CD4-positive, alpha-beta memory T cell (primary cell): ENCODE measurements at regions of chr14 and their contacts with region 1.

Region 1: GRCh38 chr14:23555882-23556699 is at the start of gene THTPA:
- DNase-seq: peak; percentile 90 to 97 (median 92)
- H3K4me3 ChIP-seq: peak within 1 kb of the TSS; percentile 84 to 97
- H3K4me3 Mint-ChIP-seq: peak within 1 kb of the TSS; percentile 95 to 99 (median 96)
- H3K27ac ChIP-seq: peak within 1 kb of the TSS; percentile 86
- H3K27ac Mint-ChIP-seq: peak within 1 kb of the TSS; percentile 82 to 98 (median 97)
- H3K4me1 ChIP-seq: peaks cover 33% of the 10 kb centered on the region
- H3K4me1 Mint-ChIP-seq: peaks cover 15 to 44% (median 28%) of the 10 kb centered on the region in 4 donors
- H3K27me3 ChIP-seq: no peaks in the 10 kb centered on the region
- H3K27me3 Mint-ChIP-seq: peaks cover 0 to 2% of the 10 kb centered on the region in 2 donors
- total RNA-seq, gene THTPA: 25.6 to 26.2 TPM

Region 2: DNA sequence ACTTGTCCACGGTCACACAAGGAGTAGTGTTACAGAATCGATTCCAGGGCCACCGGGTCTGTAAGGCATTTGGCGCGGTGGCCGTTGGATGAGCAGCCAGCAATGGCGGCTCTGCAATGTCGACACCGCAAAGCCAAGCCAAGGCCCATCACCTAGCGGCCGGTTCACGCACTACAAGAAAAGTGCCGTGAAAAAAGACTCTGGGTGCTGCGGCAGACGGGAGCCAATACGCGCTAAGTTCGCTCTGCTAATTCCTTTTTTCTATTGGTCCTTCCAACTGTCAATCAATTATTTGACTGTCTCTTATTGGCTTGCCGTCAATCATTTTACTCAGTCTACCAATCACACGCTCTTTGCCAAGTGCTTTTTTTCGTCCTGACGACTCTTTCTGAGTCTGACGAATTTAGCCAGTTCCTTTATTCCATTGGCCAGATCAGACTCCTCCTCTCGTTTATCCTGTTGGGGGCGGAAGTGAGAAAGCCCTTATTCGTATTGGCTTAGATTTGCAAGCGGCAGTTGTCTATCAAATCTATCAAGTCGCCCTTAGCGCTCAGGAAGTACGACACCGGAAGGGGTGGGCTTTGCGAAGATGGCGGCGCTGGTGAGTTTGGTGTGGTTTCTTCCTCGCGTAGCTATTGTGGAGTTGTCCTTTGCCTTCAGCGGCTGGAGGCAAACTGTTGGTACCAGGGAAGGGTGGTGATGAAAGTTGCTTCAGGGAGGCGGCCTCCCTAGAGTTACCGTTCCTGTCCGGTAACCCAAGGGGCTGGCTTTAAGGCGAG is 86.8 kb before region 1 on chr14 and contains the start of gene NGDN:
- CTCF ChIA-PET with region 1: interaction called, 174 read pairs
- POLR2A ChIA-PET with region 1: interaction called, 4 read pairs
- intact Hi-C with region 1: loop called (anchors 1 kb)
- DNase-seq: peak; percentile 93 to 99 (median 97)
- H3K4me3 ChIP-seq: peak within 1 kb of the TSS; percentile 75 to 78
- H3K4me3 Mint-ChIP-seq: peak within 1 kb of the TSS in 1 of 8 donors; percentile 35
- H3K27ac ChIP-seq: peak within 1 kb of the TSS; percentile 89
- H3K27ac Mint-ChIP-seq: peak within 1 kb of the TSS in 3 of 7 donors; percentile 36 to 78 (median 43)
- H3K4me1 ChIP-seq: peaks cover 17% of the 10 kb centered on the region
- H3K4me1 Mint-ChIP-seq: peaks cover 0 to 7% (median 6%) of the 10 kb centered on the region in 4 donors
- H3K27me3 ChIP-seq: no peaks in the 10 kb centered on the region
- H3K27me3 Mint-ChIP-seq: no peaks in the 10 kb centered on the region
- total RNA-seq, gene NGDN: 60.7 to 63.5 TPM

Region 3: DNA sequence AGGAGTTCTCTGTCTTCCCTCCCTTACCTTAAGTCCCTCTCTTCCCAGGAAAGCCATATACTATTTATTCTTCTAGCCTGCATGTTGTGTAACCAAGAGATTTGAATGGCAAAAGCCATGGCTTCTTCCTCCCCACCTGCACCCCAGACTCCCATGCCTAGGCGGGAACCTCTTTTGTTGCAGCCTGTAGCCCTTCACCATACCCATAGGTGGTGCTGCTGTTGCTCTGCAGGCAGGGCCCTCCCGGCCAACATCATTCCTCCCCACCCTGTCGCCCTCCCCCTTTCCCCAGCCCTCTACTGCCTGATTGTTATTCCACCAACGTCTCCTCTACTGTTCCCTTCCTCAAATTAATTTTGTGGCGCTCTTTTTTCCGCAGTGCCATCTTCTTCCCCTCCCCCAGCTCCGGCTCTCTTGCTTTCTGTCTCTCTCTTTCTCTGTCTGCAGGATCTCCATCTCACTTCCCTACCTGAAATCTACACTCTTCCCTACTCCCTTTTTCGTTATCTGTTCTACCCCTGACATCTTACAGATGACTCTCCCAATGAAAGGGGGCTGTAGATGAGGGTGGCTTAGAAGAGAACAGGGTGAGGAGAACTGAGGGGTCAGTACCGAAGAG is 72.7 kb before region 1 on chr14:
- CTCF ChIA-PET with region 1: interaction called, 174 read pairs
- POLR2A ChIA-PET with region 1: interaction called, 6 read pairs
- intact Hi-C with region 1: no loop called
- DNase-seq: no peak
- H3K4me3 ChIP-seq: no peak overlapping the region
- H3K4me3 Mint-ChIP-seq: no peak overlapping the region
- H3K27ac ChIP-seq: no peak overlapping the region
- H3K27ac Mint-ChIP-seq: no peak overlapping the region
- H3K4me1 ChIP-seq: no peaks in the 10 kb centered on the region
- H3K4me1 Mint-ChIP-seq: peaks cover 0 to 4% (median 2%) of the 10 kb centered on the region in 4 donors
- H3K27me3 ChIP-seq: no peaks in the 10 kb centered on the region
- H3K27me3 Mint-ChIP-seq: no peaks in the 10 kb centered on the region

Region 4: DNA sequence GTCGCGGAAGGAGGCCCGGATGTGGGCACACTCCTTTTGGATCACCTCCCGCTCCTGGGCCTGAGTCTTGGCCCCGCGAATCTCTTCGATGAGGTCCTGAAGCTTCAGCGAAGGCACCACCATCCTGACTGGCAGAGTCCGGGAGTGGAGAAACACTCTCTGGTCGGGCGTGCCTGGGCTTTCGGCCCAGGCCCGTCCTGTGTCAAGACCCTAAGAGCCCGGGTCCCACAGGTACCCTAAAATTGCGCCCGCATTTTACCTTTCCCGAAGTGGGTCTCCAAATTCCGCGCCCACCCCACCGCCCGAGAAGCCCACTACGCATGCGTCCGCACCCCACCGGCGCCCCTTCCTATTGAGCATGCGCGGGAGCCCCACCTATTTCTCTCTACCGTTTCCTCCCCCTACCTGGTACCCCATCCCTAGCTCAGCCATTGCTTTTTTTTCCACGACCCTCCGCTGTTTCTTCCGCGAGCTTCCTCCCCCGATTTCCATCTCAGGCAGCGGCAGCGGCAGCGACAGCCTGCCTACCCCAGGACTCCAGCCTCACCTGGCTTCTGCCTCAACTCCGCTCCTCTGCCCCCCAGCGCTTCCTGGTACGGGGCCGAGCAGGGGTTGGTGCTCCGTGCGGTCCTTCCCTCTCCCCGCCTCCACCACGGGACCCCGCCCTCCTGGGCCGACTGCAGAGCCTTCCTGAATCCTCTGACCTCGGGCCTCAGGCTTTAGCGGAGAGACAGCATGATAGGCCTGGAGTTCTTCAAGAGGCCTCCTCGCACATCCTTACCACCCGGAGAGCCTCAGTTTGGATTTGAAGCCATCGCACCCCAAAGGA is 11.3 kb after region 1 on chr14 and contains the start of gene AP1G2:
- CTCF ChIA-PET with region 1: interaction called, 24 read pairs
- POLR2A ChIA-PET with region 1: interaction called, 44 read pairs
- intact Hi-C with region 1: loop called (anchors 1 kb)
- DNase-seq: peak; percentile 85 to 88 (median 86)
- H3K4me3 ChIP-seq: peak within 1 kb of the TSS; percentile 79 to 94
- H3K4me3 Mint-ChIP-seq: peak within 1 kb of the TSS; percentile 97 to 100 (median 100)
- H3K27ac ChIP-seq: peak within 1 kb of the TSS; percentile 74
- H3K27ac Mint-ChIP-seq: peak within 1 kb of the TSS; percentile 95 to 100 (median 98)
- H3K4me1 ChIP-seq: peaks cover 22% of the 10 kb centered on the region
- H3K4me1 Mint-ChIP-seq: peaks cover 22 to 55% (median 37%) of the 10 kb centered on the region in 4 donors
- H3K27me3 ChIP-seq: no peaks in the 10 kb centered on the region
- H3K27me3 Mint-ChIP-seq: peaks cover 1 to 2% of the 10 kb centered on the region in 2 donors
- total RNA-seq, gene AP1G2: 492 to 498 TPM

Region 5: DNA sequence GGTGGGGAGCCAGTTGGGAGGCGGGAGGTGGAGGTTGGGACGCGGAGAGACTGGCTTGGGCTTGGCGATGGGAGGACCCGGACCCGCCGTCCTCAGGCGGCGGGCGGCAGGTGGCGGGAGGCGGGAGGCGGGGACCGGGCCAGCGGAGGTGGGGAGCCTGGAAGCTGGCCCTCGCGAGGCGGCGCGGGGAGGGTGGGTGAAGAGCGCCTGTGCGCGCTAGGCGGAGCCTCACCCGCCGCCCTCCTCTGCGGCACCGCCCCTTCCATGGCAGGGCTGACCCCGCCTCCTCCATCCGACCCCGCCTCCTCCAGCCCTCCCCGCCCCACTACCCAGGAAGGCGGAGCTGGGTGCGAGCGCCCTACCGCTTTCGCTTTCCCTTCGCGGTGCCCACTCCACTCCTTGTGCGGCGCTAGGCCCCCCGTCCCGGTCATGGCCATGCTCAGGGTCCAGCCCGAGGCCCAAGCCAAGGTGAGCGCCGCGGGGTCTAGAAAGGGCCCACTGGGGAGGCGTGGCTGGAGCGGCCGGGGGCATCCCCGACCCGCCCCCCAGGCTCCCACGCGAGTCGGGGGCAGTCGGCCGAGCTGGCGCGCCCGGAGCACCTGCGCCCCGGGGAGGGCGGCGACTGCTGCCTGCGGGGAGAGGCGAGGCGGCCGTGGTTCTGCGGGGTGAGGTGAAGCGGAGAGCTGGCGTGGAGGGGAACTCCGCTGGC is 579.9 kb after region 1 on chr14 and contains the start of gene PSME1:
- CTCF ChIA-PET with region 1: no interaction called
- POLR2A ChIA-PET with region 1: no interaction called
- intact Hi-C with region 1: loop called (anchors 2 kb)
- DNase-seq: peak; percentile 92 to 94 (median 93)
- H3K4me3 ChIP-seq: peak within 1 kb of the TSS; percentile 30 to 87
- H3K4me3 Mint-ChIP-seq: peak within 1 kb of the TSS; percentile 87 to 94 (median 92)
- H3K27ac ChIP-seq: peak within 1 kb of the TSS; percentile 84
- H3K27ac Mint-ChIP-seq: peak within 1 kb of the TSS; percentile 88 to 96 (median 94)
- H3K4me1 ChIP-seq: peaks cover 59% of the 10 kb centered on the region
- H3K4me1 Mint-ChIP-seq: peaks cover 35 to 70% (median 55%) of the 10 kb centered on the region in 4 donors
- H3K27me3 ChIP-seq: no peaks in the 10 kb centered on the region
- H3K27me3 Mint-ChIP-seq: no peaks in the 10 kb centered on the region
- total RNA-seq, gene PSME1: 257 to 273 TPM